Left colon (tissue), 2 donors: ENCODE measurements at regions of chr1 and their contacts with region 1.

Region 1: DNA sequence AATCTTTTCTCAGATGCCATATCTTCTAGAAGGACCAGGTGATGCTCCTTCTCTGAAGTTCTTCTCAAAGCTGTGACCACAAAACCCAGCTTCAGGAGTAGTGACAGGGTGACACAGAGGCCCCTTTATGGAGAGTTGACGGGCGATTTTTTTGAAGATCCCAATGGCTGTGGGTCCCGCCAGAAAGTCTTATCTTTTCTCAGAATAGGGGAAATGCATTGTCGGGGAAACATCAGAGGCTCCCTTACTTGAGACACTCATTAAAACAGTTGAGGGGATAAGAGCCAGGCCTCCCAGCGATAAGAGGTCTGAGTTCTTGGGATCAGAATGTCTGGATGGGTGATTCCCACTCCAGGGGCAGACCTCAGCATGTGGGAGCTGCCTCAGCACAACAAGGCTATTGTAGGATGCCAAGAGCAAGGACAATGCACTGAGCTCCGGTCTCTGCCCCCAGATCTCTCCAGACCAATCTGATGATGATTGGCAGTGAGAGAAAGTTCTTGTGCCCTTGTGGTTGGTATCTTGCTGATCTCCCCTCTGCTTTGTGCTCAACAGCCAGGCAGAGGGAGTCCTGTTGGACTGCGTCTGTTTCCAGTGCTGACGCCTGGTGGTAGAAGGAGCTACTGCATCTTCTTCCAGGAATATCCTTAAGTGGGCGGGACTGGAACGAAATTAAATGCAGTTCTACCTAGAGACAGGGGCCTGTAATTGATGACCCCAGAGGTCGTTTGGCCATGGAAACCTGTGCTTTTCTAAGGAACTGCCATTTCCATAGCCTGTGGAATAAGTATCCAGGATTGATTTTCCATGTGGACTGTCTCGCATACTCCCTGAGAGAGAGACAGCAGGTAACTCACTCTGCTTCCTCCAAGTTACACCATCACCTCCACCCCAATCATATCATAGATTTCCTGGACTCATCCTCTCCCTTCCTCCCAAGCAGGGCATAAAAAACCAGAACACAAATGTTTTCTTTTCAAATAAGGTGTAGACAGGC is 6.8 kb upstream of the ACKR1 start:
- DNase-seq: peak; percentile 44 to 73
- ATAC-seq: peak; percentile 77

Region 2: GRCh38 chr1:159098596-159098995 is 99.3 kb before region 1 on chr1:
- intact Hi-C with region 1: no loop called
- DNase-seq: no peak
- ATAC-seq: no peak

Region 3: GRCh38 chr1:159161001-159161718 is 36.7 kb before region 1 on chr1:
- intact Hi-C with region 1: loop called in 1 of 2 experiments (anchors 5 kb)
- DNase-seq: peak; percentile 52 to 66
- ATAC-seq: peak; percentile 91

Region 4: GRCh38 chr1:159352436-159352835 is 154.6 kb after region 1 on chr1:
- intact Hi-C with region 1: no loop called
- DNase-seq: no peak
- ATAC-seq: no peak